PC-9 (cell line): ENCODE measurements at regions of chr3 and their contacts with region 1.

Region 1: GRCh38 chr3:124559881-124560574 is 170.2 kb upstream of the UMPS start:
- DNase-seq: peak in 1 of 2 experiments; percentile 74
- H3K4me3 ChIP-seq: no peak overlapping the region
- H3K27ac ChIP-seq: no peak overlapping the region
- H3K4me1 ChIP-seq: peaks cover 8% of the 10 kb centered on the region
- H3K27me3 ChIP-seq: peaks cover 45% of the 10 kb centered on the region
- CTCF ChIP-seq: peak; percentile 87

Region 2: DNA sequence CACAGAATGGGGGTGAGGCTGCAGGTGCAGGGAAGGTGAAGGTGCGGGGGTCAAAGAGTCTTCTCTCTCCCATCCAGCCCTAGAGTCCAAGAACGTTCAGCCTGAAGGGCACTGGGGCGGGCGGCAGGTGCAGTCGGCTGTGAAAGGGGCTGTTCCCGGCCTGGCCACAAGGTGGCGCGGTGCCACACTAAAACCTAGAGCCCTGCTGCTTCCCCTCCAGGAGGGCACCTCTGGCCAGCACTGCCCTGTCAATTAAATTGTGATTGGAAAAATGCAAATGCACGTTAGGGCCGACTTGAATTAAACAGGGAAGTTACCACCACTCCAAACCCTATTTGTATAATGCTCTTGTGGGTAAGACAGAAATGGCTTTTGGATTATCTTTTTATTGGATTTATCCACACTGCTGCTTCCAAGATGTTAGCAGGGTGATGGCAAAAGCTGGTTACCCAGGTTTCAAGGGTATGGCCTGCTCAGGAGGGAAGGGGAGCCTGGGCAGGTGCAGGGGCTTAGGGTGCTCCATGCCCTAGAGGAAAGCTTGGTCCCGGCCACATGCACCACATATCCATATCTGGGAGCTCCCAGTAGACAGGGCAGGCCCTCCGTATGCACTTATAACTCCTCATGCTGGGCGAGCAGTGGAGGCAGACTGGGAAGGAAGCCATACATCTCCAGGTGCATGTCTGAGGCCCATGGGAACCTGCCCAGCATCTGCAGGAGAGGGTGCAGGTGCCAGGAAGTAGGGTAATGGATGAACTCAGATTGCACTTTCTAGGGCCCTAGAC is 1231.0 kb before region 1 on chr3:
- CTCF ChIA-PET with region 1: no interaction called
- POLR2A ChIA-PET with region 1: no interaction called
- intact Hi-C with region 1: loop called (anchors 10 kb)
- DNase-seq: peak; percentile 42 to 80
- H3K4me3 ChIP-seq: no peak overlapping the region
- H3K27ac ChIP-seq: no peak overlapping the region
- H3K4me1 ChIP-seq: no peaks in the 10 kb centered on the region
- H3K27me3 ChIP-seq: no peaks in the 10 kb centered on the region
- CTCF ChIP-seq: peak; percentile 91

Region 3: DNA sequence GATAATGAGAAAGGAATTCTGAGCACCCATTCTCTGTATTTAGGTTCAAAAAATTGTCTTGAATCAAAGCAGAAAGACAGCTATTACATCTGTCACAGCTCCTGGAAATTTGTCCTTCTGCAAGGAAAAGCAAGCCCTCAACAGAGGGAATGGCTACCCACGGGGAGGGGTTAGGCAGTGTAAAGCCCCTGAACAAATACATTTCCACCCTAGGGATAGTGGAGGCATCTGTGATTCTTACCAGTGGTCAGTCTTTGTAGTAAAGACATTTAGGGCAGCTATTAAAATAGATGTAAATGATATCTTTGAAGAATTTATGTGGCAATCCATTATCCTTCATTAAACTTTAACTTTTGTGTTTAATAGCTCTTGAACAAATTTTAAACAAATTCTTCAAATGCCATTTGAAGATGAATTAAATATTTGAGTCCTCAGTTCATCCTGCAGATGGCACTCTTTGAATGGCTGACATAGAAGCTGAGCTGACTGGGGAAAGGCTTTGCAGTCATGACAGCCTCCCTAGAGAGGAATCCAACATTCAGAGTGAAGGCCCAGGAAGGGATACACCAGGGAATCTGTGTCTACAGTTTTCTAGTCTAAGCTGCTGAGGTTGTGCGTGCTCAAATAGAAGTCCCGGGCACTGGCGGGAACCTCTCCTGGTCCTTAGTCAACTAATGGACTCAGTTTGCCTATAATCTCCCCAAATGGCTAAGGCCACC is 208.4 kb before region 1 on chr3:
- CTCF ChIA-PET with region 1: interaction called, 4 read pairs
- POLR2A ChIA-PET with region 1: no interaction called
- intact Hi-C with region 1: loop called (anchors 2 kb)
- DNase-seq: peak in 1 of 2 experiments; percentile 21
- H3K4me3 ChIP-seq: no peak overlapping the region
- H3K27ac ChIP-seq: no peak overlapping the region
- H3K4me1 ChIP-seq: no peaks in the 10 kb centered on the region
- H3K27me3 ChIP-seq: peaks cover 25% of the 10 kb centered on the region
- CTCF ChIP-seq: peak; percentile 64

Region 4: DNA sequence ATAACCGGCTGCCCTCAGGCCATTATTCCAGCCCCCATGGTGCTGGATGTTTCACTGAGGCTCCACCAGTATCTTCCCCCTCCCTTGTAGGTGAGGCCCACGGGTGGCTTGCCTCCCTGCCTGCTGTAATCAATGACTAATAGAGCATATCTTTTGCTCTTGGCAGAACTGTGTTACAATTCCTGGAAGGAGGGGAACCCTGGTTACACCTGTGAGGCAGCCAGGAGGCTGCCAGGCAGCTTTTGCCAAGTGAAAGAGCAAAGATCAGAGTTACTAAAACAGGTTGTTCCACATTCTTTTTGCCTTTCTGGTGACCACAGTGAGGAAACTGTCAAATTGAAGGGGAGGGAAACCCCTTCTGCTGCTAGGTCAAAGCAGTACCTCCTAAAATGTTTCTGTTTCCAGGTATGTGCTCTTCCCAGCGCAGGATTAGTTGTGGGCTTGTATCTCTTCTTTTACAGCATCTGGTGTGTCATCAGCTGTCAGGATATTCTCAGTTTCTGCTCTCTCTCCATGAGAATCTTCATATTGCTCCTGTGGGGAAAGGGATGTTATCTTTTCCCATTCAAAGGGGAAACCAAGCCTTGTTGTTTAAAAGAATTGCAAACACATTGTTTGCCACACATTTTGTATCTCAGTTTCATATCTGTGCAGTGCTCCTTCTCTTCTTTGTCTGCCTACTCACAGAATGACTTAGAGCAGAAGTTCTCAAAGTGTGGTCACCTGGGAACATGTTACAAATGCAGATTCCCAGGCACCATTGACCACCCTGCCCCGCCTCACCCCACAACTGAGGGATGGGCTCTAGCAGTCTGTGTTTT is 32.8 kb after region 1 on chr3:
- CTCF ChIA-PET with region 1: interaction called, 10 read pairs
- POLR2A ChIA-PET with region 1: no interaction called
- intact Hi-C with region 1: no loop called
- DNase-seq: peak; percentile 87 to 98
- H3K4me3 ChIP-seq: no peak overlapping the region
- H3K27ac ChIP-seq: no peak overlapping the region; the same call in 1 of the 2 replicates
- H3K4me1 ChIP-seq: peaks cover 25% of the 10 kb centered on the region
- H3K27me3 ChIP-seq: no peaks in the 10 kb centered on the region
- CTCF ChIP-seq: no peak

Region 5: DNA sequence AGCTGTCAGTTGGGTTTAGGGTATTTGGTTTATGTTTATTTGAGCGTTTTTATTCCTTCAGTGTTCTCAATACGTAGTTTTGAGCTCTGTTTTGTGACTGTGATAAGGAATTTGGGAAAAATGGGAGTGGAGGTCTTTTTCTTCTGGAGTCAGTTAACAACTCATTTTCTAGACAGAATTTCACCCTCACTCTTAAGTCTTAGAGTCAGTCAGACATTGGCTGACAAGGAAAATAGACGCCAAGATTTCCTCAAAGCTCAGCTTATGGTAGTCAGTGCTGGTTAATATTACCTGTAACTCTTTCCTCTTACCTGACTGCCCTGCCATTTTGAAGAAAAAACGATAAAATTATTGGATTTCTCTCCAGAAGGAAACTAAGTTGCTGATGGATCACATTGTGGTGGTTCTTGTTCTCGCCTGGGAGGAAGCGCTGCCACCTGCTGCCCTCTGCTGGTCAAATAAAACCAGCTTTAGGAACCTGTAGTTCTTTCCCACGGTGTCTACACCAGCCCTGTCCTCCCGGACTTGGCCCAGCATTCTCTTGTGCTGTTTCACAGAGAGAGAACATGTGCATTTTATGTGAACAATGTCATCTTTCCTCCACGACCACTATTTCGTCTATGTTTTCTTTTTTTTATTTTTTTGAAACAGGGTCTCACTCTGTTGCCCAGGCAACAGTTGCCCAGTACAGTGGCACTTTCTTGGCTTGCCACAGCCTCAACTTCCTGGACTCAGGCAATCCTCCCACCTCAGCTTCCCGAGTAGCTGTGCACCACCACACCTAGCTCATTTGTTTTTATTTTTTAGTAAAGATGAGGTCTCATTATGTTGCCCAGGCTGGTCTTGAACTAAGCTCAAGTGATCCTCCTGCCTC is 128.8 kb after region 1 on chr3:
- CTCF ChIA-PET with region 1: interaction called, 17 read pairs
- POLR2A ChIA-PET with region 1: no interaction called
- intact Hi-C with region 1: loop called (anchors 1 kb)
- DNase-seq: peak; percentile 57 to 81
- H3K4me3 ChIP-seq: no peak overlapping the region
- H3K27ac ChIP-seq: no peak overlapping the region
- H3K4me1 ChIP-seq: no peaks in the 10 kb centered on the region
- H3K27me3 ChIP-seq: peaks cover 5% of the 10 kb centered on the region; the same call in 1 of the 2 replicates
- CTCF ChIP-seq: peak; percentile 89

Region 6: DNA sequence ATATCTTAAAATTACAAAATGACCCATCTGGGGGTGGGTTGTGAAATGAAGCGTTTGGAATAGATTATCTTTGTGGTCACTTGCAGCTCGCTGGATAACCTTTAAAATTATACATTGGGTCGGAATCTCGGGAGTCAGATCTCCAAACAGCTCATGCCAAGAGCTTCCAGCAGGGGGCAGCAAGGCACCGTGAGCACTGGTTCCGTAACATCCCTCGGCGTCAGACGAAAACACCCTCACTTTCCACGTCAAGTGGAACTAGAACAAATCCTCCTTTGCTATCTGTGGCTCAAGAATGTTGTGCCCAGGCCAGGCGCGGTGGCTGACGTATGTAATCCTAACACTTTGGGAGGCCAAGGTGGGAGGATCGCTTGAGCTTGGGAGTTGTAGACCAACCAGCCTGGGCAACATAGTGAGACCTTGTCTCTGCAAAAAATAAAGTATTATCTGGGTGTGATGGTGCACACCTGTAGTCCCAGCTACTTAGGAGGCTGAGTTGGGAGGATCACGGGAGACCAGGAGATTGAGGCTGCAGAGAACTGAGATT is 201.3 kb after region 1 on chr3:
- CTCF ChIA-PET with region 1: no interaction called
- POLR2A ChIA-PET with region 1: no interaction called
- intact Hi-C with region 1: loop called (anchors 5 kb)
- DNase-seq: peak; percentile 55 to 65
- H3K4me3 ChIP-seq: no peak overlapping the region
- H3K27ac ChIP-seq: no peak overlapping the region
- H3K4me1 ChIP-seq: peaks cover 13% of the 10 kb centered on the region
- H3K27me3 ChIP-seq: no peaks in the 10 kb centered on the region
- CTCF ChIP-seq: peak; percentile 95

Region 7: GRCh38 chr3:124972463-124972862 is 412.4 kb after region 1 on chr3:
- CTCF ChIA-PET with region 1: no interaction called
- POLR2A ChIA-PET with region 1: no interaction called
- intact Hi-C with region 1: no loop called
- DNase-seq: no peak
- H3K4me3 ChIP-seq: no peak overlapping the region
- H3K27ac ChIP-seq: no peak overlapping the region
- H3K4me1 ChIP-seq: no peaks in the 10 kb centered on the region
- H3K27me3 ChIP-seq: no peaks in the 10 kb centered on the region
- CTCF ChIP-seq: no peak

Region 8: GRCh38 chr3:124986158-124987143 is 426.4 kb after region 1 on chr3:
- CTCF ChIA-PET with region 1: no interaction called
- POLR2A ChIA-PET with region 1: no interaction called
- intact Hi-C with region 1: loop called (anchors 5 kb)
- DNase-seq: peak; percentile 75 to 87
- H3K4me3 ChIP-seq: no peak overlapping the region
- H3K27ac ChIP-seq: peak overlapping the region; percentile 83
- H3K4me1 ChIP-seq: peaks cover 28% of the 10 kb centered on the region
- H3K27me3 ChIP-seq: no peaks in the 10 kb centered on the region
- CTCF ChIP-seq: peak; percentile 74